Motor neuron (in vitro differentiated cells): ENCODE measurements at regions of chr6 and their contacts with region 1.

Region 1: GRCh38 chr6:148972481-148972880 is 225.7 kb downstream of the UST start:
- ATAC-seq: peak in 7 of 8 experiments; percentile 49 to 92 (median 85)
- H3K4me3 ChIP-seq: no peak overlapping the region
- H3K27ac ChIP-seq: no peak overlapping the region
- H3K4me1 ChIP-seq: peaks cover 0 to 4% of the 10 kb centered on the region in 2 donors

Region 2: GRCh38 chr6:148559848-148560433 is 412.5 kb before region 1 on chr6:
- in situ Hi-C with region 1: loop called in 2 of 9 experiments (anchors 25 kb)
- ATAC-seq: peak; percentile 81 to 96 (median 94)
- H3K4me3 ChIP-seq: peak overlapping the region; percentile 27 to 48 (median 34)
- H3K27ac ChIP-seq: no peak overlapping the region
- H3K4me1 ChIP-seq: no peaks in the 10 kb centered on the region

Region 3: GRCh38 chr6:148578245-148578732 is 394.2 kb before region 1 on chr6:
- in situ Hi-C with region 1: loop called in 5 of 9 experiments (anchors 25 kb)
- ATAC-seq: peak; percentile 100
- H3K4me3 ChIP-seq: no peak overlapping the region
- H3K27ac ChIP-seq: no peak overlapping the region
- H3K4me1 ChIP-seq: peaks cover 3% of the 10 kb centered on the region in 2 donors

Region 4: DNA sequence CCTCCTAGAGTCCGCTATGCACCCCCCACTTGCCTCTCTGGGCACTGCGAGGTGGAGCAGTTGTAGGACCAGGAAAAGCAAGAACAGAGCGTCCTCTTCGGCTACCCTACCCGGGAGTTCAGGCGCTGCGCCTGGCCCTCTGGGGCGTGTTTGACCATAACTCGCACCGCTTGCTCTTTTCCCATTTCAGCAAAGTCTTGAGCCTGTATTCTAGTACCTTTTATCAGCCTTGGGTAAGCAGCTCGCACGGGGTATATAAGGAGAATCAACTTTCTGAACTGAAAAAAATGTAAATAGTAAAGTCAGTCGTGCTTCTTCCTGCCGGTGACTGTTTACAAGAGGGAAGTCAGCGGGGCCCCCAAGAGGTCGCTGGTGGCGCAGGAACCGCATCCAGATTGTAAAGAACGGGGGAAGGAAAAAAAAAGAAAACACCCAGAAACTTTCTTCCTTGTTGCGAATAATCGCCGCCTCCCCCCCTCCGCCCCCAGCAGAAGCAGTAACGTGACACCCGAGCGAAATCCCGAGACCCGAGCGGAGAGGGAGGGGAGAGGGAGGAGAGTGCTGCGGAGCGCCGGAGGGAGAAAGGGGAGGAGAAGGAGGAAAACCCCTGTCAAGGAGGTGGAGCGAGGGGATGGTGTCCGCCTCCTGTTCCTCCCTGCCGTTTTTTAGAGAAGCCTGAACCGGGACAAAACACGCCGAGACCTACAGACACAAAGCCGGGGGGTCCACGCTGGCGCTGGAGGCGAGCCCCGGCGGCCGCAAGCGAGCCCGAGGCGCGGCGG is 225.9 kb before region 1 on chr6 and contains the start of gene UST:
- in situ Hi-C with region 1: loop called in 1 of 9 experiments (anchors 25 kb)
- ATAC-seq: peak; percentile 58 to 86 (median 64)
- H3K4me3 ChIP-seq: peak within 1 kb of the TSS; percentile 61 to 82 (median 77)
- H3K27ac ChIP-seq: peak within 1 kb of the TSS in 1 of 2 donors; percentile 63
- H3K4me1 ChIP-seq: peaks cover 5 to 6% of the 10 kb centered on the region in 2 donors
- total RNA-seq, gene UST: 5.2 to 22.9 (median 7.8) TPM